ENCODE measurements at regions of chr1 and their contacts with region 1.

Region 1: DNA sequence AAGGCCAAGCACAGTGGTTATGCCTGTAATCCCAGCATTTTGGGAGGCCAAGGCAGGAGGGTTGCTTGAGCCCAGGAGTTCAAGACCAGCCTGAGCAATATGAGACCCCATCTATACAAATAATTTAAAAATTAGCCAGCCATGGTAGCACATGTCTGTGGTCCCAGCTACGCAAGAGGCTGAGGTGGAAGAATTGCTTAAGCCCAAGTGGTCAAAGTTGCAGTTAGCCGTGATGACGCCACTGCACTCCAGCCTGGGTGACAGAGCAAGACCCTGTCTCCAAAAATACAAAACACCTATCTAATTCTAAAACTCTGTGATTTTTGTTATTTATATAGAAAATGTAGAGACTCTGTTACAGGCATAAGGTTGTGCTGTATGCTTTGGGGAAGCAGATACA is 44.2 kb upstream of the ZYG11A start:
- DNase-seq: no peak
- H3K4me3 ChIP-seq: no peak overlapping the region
- H3K27ac ChIP-seq: no peak overlapping the region
- H3K4me1 ChIP-seq: no peaks in the 10 kb centered on the region
- H3K27me3 ChIP-seq: no peaks in the 10 kb centered on the region
- CTCF ChIP-seq: no peak
- POLR2A ChIP-seq: no peak

Region 2: DNA sequence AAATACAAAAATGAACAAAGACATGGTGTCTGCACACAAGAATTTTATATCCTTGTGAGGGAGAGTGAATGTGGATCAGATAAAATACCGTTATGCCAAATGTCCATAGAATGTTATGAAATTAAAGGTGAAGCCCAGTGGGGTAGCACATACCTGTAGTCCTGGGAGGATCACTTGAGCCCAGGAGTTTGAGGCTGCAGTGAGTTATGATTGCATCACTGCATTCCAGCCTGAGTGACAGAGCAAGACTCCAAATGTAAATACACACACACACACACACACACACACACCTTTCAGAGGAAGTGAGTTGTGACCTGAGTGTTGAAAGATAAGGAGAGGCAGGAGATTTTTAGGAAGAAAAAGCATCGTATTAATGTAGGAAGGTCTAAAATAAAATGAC is 16.1 kb after region 1 on chr1:
- CTCF ChIA-PET with region 1: interaction called, 3 read pairs
- POLR2A ChIA-PET with region 1: interaction called, 10 read pairs
- dilution Hi-C with region 1: no loop called
- intact Hi-C with region 1: no loop called
- DNase-seq: no peak
- H3K4me3 ChIP-seq: no peak overlapping the region
- H3K27ac ChIP-seq: no peak overlapping the region
- H3K4me1 ChIP-seq: no peaks in the 10 kb centered on the region
- H3K27me3 ChIP-seq: no peaks in the 10 kb centered on the region
- CTCF ChIP-seq: no peak
- POLR2A ChIP-seq: no peak

Region 3: GRCh38 chr1:53348486-53349368 is 550.4 kb after region 1 on chr1:
- CTCF ChIA-PET with region 1: no interaction called
- POLR2A ChIA-PET with region 1: no interaction called
- dilution Hi-C with region 1: no loop called
- intact Hi-C with region 1: no loop called
- DNase-seq: no peak
- H3K4me3 ChIP-seq: no peak overlapping the region
- H3K27ac ChIP-seq: no peak overlapping the region
- H3K4me1 ChIP-seq: no peaks in the 10 kb centered on the region
- H3K27me3 ChIP-seq: peaks cover 4% of the 10 kb centered on the region in 2 experiments
- CTCF ChIP-seq: no peak
- POLR2A ChIP-seq: no peak